ENCODE measurements at regions of chr6 and their contacts with region 1.

Region 1: DNA sequence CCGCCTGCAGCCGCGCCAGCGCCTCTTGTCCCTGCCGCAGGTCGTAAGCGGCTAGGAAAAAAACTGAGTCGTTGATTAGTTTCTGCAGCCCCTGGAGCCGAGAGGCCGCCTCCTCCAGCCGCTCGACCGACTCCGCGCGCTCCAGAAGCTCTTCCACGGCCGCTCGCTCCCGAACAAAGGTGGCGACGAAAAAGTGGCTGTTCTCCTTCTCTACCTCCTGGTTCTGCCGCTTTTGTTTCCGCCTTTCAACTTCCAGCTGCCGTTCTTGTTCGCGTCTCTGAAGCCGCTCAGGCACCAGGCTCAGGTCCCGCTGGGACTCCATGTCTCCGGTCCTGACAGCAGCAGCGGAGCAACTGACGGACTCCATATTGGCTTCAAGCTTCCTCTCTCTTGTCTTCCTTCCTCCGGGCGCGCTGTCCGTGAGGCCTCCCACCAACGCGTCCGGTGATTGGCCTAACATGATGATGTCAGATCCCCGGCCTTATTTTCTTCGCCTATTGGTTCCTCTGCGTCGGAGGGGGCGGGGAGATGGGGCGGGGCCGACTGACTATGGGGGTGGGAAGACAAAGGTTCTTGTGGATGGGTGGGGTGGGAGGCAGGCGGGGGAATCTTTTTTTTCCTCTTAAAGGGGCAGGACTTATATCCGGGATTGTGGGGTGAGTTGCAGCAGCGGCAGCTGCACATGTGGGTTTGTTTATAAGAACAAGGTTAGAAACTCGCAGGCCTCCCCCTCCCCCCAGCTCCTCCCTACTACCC is at the start of gene TBCC:
- DNase-seq: peak; percentile 91 to 94
- H3K4me3 ChIP-seq: peak within 1 kb of the TSS; percentile 78
- H3K27ac ChIP-seq: peak within 1 kb of the TSS; percentile 70
- H3K4me1 ChIP-seq: peaks cover 19% of the 10 kb centered on the region
- H3K27me3 ChIP-seq: no peaks in the 10 kb centered on the region
- CTCF ChIP-seq: no peak
- total RNA-seq, gene TBCC: 12.3 and 15.1 TPM in 2 replicates

Region 2: GRCh38 chr6:42230345-42231321 is 515.3 kb before region 1 on chr6:
- CTCF ChIA-PET with region 1: interaction called, 30 read pairs
- POLR2A ChIA-PET with region 1: no interaction called
- intact Hi-C with region 1: no loop called
- DNase-seq: no peak
- H3K4me3 ChIP-seq: no peak overlapping the region
- H3K27ac ChIP-seq: 0 out of 2 replicates have a peak overlapping the region, but pooled peaks have one; percentile 2
- H3K4me1 ChIP-seq: peaks cover 47% of the 10 kb centered on the region
- H3K27me3 ChIP-seq: no peaks in the 10 kb centered on the region
- CTCF ChIP-seq: peak; percentile 69

Region 3: GRCh38 chr6:42766141-42766670 is 20.3 kb after region 1 on chr6:
- CTCF ChIA-PET with region 1: no interaction called
- POLR2A ChIA-PET with region 1: no interaction called
- intact Hi-C with region 1: loop called (anchors 2 kb)
- DNase-seq: peak; percentile 40 to 92
- H3K4me3 ChIP-seq: no peak overlapping the region
- H3K27ac ChIP-seq: peak overlapping the region; percentile 63
- H3K4me1 ChIP-seq: peaks cover 21% of the 10 kb centered on the region
- H3K27me3 ChIP-seq: no peaks in the 10 kb centered on the region
- CTCF ChIP-seq: no peak

Region 4: GRCh38 chr6:42808492-42809483 is 62.9 kb after region 1 on chr6:
- CTCF ChIA-PET with region 1: no interaction called
- POLR2A ChIA-PET with region 1: interaction called, 33 read pairs
- intact Hi-C with region 1: no loop called
- DNase-seq: no peak
- H3K4me3 ChIP-seq: no peak overlapping the region
- H3K27ac ChIP-seq: no peak overlapping the region
- H3K4me1 ChIP-seq: no peaks in the 10 kb centered on the region
- H3K27me3 ChIP-seq: no peaks in the 10 kb centered on the region
- CTCF ChIP-seq: no peak

Region 5: DNA sequence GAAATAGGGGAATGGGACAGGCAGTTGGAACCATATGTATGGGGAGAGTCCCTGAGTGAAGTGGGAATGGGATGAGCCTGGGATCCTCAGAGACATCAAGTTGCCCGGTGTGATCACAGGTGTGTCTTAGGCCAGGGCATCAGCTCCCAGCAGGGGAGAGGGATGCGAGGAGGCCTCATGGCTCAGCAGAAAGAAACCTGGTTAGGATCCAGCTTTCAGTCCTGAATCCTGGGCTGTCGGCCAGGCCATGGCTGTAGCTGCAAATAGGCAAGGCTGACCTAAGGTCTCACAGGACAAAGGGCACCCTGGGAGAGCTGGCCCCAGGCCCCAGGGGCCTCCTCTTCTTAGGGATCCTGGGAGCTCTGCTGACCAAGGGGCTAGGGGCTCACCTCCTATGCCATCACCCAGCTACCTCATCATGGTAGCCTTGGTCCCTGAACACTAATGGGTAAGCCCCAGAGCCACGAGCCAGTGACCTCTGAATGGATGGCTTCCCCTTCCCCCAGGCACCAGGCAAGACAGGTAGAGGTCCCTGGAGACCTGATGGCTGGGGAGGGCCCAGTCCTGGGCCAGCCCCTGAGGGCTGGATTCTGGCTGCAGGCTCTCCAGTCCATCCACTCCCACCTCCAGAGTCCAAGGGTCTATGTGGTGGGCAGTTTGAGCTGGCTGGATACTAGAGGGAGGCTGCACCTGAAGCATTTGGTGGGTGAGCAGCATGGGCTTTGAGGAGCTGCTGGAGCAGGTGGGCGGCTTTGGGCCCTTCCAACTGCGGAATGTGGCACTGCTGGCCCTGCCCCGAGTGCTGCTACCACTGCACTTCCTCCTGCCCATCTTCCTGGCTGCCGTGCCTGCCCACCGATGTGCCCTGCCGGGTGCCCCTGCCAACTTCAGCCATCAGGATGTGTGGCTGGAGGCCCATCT is 552.0 kb after region 1 on chr6 and contains the start of gene SLC22A7:
- CTCF ChIA-PET with region 1: interaction called, 16 read pairs
- POLR2A ChIA-PET with region 1: no interaction called
- intact Hi-C with region 1: no loop called
- DNase-seq: no peak
- H3K4me3 ChIP-seq: no peak within 1 kb of the TSS
- H3K27ac ChIP-seq: no peak within 1 kb of the TSS
- H3K4me1 ChIP-seq: no peaks in the 10 kb centered on the region
- H3K27me3 ChIP-seq: no peaks in the 10 kb centered on the region; the same call in 1 of the 2 replicates
- CTCF ChIP-seq: no peak
- total RNA-seq, gene SLC22A7: not detected in 2 replicates